Activated B cell treated with CpG ODN at 0.5 μM for 24 hours (primary cell): ENCODE measurements at regions of chr4 and their contacts with region 1.

Region 1: DNA sequence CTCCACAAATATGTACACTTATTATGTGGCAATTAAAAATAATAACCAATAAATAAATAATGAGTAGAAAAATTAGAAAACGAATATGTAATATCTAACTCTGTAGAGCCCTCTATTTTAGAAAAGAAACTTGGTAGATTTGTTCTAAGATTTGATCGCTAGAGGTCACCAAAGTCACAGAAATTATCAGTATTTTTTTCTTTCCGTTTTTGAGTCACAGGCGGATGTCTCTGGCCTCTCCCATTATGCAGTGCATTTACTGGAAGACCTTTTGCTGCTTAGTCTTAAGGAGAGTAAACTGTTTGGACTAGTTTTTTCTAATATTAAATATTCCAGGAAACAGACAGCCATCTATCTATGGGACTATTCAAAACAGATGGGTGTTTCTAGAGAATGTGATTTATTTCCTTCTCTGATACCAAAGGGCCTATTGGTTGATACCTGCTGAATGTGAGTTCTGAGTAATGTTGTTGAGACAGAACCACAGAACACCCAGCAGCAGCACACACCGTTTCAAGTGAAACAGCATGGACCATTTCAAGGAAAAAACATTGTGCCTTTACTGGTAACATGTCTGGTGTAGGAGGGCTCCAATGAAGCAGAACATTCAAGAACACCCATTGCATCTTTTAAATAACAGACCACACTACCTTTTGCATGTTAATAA is 34.0 kb upstream of the GYPA start:
- DNase-seq: no peak
- ATAC-seq: peak; percentile 47
- H3K4me3 Mint-ChIP-seq: no peak overlapping the region
- H3K27ac Mint-ChIP-seq: no peak overlapping the region
- H3K4me1 Mint-ChIP-seq: peaks cover 5% of the 10 kb centered on the region
- H3K27me3 Mint-ChIP-seq: peaks cover 6% of the 10 kb centered on the region
- CTCF ChIP-seq: no peak

Region 2: DNA sequence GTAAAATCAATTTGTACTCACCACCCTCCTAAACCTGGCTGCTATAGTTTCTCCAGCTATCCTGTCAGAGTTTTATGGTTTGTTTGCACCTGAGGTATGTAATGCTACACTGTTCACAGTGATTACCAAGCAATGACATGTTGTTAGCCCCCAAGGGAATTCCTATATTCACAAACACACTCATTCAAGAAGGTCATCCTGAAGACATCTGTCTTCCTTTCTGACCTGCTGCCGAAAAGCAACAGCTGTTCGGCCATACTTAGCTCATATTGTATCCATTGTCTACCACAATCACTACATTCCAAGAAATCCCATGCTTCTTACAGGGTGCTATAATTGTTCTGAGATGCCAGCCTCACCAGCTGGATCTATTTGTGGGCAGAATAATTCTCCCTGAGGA is 126.1 kb after region 1 on chr4:
- CTCF ChIA-PET with region 1: no interaction called
- POLR2A ChIA-PET with region 1: no interaction called
- intact Hi-C with region 1: no loop called
- DNase-seq: no peak
- ATAC-seq: no peak
- H3K4me3 Mint-ChIP-seq: no peak overlapping the region
- H3K27ac Mint-ChIP-seq: no peak overlapping the region
- H3K4me1 Mint-ChIP-seq: no peaks in the 10 kb centered on the region
- H3K27me3 Mint-ChIP-seq: no peaks in the 10 kb centered on the region
- CTCF ChIP-seq: no peak

Region 3: DNA sequence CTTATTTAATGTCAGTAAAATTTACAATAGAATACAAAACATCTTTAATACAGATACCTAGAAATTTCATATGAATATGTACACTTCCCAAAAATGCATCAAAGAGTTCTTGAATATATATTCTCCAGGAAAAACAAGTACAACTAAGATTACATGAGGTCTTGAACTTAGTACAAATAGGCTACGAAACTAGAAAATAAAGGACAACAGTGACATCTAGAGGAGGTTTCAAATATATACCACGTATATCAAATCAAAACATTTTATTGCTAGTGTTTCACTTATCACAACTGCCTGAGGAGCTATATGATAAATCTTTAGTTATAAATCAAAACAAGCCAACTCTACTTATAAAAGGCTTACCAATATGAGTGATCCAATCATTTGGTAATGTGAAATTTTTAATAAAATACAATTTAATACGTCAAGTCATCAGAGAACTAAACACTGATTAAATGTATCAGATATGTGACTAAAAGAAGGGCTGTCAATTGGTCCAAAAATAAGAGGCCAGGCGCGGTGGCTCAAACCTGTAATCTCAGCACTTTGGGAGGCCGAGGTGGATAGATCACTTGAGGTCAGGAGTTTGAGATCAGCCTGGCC is 886.9 kb after region 1 on chr4:
- CTCF ChIA-PET with region 1: interaction called, 10 read pairs
- POLR2A ChIA-PET with region 1: no interaction called
- intact Hi-C with region 1: loop called (anchors 1 kb)
- DNase-seq: no peak
- ATAC-seq: no peak
- H3K4me3 Mint-ChIP-seq: no peak overlapping the region
- H3K27ac Mint-ChIP-seq: no peak overlapping the region
- H3K4me1 Mint-ChIP-seq: no peaks in the 10 kb centered on the region
- H3K27me3 Mint-ChIP-seq: no peaks in the 10 kb centered on the region
- CTCF ChIP-seq: no peak

Region 4: DNA sequence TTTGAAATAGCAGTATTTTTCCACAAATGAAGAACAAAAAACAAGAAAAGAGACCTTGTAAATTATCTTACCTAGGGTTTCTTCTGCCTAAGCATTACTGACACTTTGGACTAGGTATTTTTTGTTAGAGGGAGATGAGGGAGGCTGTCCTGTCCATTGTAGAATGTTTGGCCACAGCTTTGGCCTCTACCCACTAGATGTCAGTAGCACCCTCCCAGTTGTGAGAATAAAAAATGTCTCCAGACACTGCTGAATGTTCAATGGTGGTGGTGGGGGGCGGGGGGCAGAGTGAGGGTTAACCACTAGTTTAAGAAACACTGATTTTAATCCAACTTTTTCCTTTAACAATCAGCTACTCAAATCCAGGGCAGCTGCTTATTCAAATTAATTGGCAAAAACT is 980.0 kb after region 1 on chr4:
- CTCF ChIA-PET with region 1: no interaction called
- POLR2A ChIA-PET with region 1: no interaction called
- intact Hi-C with region 1: loop called (anchors 1 kb)
- DNase-seq: no peak
- ATAC-seq: peak; percentile 37
- H3K4me3 Mint-ChIP-seq: no peak overlapping the region
- H3K27ac Mint-ChIP-seq: no peak overlapping the region
- H3K4me1 Mint-ChIP-seq: peaks cover 8% of the 10 kb centered on the region
- H3K27me3 Mint-ChIP-seq: no peaks in the 10 kb centered on the region
- CTCF ChIP-seq: no peak

Region 5: DNA sequence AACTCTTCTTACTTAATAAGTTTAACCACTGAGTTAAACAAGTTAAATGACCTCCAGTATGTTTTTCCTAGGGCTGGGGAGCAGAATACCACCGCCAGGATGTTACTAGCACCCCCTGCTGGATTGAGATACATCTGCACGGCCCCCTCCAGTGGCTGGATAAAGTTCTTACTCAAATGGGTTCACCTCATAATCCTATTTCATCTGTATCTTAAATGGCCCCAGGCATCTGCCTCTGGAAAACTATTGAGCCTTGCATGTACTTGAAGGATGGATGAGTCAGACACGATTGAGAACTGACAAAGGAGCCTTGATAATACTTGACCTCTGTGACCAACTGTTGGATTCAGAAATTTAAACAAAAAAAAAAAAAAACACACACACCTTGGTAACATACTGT is 1383.2 kb after region 1 on chr4:
- CTCF ChIA-PET with region 1: interaction called, 3 read pairs
- POLR2A ChIA-PET with region 1: no interaction called
- intact Hi-C with region 1: loop called (anchors 1 kb)
- DNase-seq: no peak
- ATAC-seq: peak; percentile 70
- H3K4me3 Mint-ChIP-seq: no peak overlapping the region
- H3K27ac Mint-ChIP-seq: no peak overlapping the region
- H3K4me1 Mint-ChIP-seq: peaks cover 1% of the 10 kb centered on the region
- H3K27me3 Mint-ChIP-seq: peaks cover 7% of the 10 kb centered on the region
- CTCF ChIP-seq: peak; percentile 68

Region 6: GRCh38 chr4:145609481-145610427 is 1435.2 kb after region 1 on chr4:
- CTCF ChIA-PET with region 1: no interaction called
- POLR2A ChIA-PET with region 1: no interaction called
- intact Hi-C with region 1: loop called (anchors 1 kb)
- DNase-seq: no peak
- ATAC-seq: peak; percentile 65
- H3K4me3 Mint-ChIP-seq: no peak overlapping the region
- H3K27ac Mint-ChIP-seq: no peak overlapping the region
- H3K4me1 Mint-ChIP-seq: no peaks in the 10 kb centered on the region
- H3K27me3 Mint-ChIP-seq: peaks cover 8% of the 10 kb centered on the region
- CTCF ChIP-seq: no peak